Spleen (tissue), 13 donors: ENCODE measurements at regions of chr16 and their contacts with region 1.

Region 1: GRCh38 chr16:82263521-82264143 is 93.6 kb upstream of the MPHOSPH6 start:
- DNase-seq: no peak
- H3K4me3 ChIP-seq: no peak overlapping the region
- H3K27ac ChIP-seq: no peak overlapping the region
- H3K4me1 ChIP-seq: no peaks in the 10 kb centered on the region
- H3K27me3 ChIP-seq: peaks cover 0 to 32% (median 0%) of the 10 kb centered on the region in 7 donors
- CTCF ChIP-seq: peak; percentile 33 to 90 (median 83)
- POLR2A ChIP-seq: no peak

Region 2: GRCh38 chr16:81595604-81596292 is 667.9 kb before region 1 on chr16:
- intact Hi-C with region 1: no loop called
- DNase-seq: no peak
- H3K4me3 ChIP-seq: no peak overlapping the region
- H3K27ac ChIP-seq: no peak overlapping the region
- H3K4me1 ChIP-seq: peaks cover 0 to 33% (median 2%) of the 10 kb centered on the region in 6 donors
- H3K27me3 ChIP-seq: no peaks in the 10 kb centered on the region
- CTCF ChIP-seq: no peak
- POLR2A ChIP-seq: no peak

Region 3: DNA sequence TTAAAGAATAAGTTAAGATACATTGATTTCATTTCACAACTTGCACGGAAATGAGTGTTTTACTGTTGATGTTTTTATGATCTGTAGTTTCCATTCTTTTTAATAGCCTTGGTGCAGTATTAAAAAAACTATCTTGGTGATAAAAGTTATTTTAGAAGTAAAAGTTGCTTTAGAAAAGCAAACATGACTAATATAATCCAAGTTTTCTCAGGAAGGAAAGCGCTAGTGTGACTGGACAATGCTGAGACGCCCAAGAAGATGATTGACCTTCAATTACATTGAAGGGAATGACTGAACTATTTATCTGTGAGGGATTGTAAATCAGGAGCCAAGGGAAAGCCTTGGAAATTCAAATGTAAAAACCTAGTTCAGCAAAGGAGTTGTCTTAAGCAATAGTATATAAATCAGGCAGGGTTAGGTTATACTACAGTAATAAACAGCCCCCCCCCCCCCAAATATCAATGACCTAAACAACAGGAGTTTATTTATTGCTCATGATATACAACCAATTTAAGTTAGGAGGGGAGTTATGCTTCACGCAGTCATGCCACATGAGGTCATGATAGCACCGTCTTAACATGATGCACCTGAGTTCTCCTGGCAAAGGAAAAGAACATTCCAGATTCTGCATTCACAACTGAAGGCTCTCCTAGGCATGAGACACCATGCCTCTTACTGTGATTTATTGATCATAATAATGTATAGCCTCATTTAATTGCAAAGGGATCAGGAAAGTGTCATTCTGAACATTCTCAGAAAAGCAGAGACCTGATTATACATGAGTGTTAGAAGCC is 807.0 kb after region 1 on chr16:
- intact Hi-C with region 1: loop called (anchors 10 kb)
- DNase-seq: no peak
- H3K4me3 ChIP-seq: no peak overlapping the region
- H3K27ac ChIP-seq: no peak overlapping the region
- H3K4me1 ChIP-seq: no peaks in the 10 kb centered on the region
- H3K27me3 ChIP-seq: peaks cover 0 to 13% (median 0%) of the 10 kb centered on the region in 7 donors
- CTCF ChIP-seq: no peak
- POLR2A ChIP-seq: no peak

Region 4: GRCh38 chr16:83215406-83216001 is 951.9 kb after region 1 on chr16:
- intact Hi-C with region 1: loop called (anchors 10 kb)
- DNase-seq: no peak
- H3K4me3 ChIP-seq: no peak overlapping the region
- H3K27ac ChIP-seq: no peak overlapping the region
- H3K4me1 ChIP-seq: no peaks in the 10 kb centered on the region
- H3K27me3 ChIP-seq: no peaks in the 10 kb centered on the region
- CTCF ChIP-seq: peak in 10 of 11 experiments; percentile 24 to 83 (median 70)
- POLR2A ChIP-seq: no peak